Mammary epithelial cell (primary cell): ENCODE measurements at regions of chr2 and their contacts with region 1.

Region 1: GRCh38 chr2:85678794-85679672 is 11.0 kb upstream of the SFTPB start:
- DNase-seq: peak; percentile 71
- H3K4me3 ChIP-seq: peak overlapping the region in 1 of 3 experiments; percentile 25
- H3K27ac ChIP-seq: no peak overlapping the region
- H3K4me1 ChIP-seq: peaks cover 12% of the 10 kb centered on the region
- H3K27me3 ChIP-seq: no peaks in the 10 kb centered on the region
- CTCF ChIP-seq: peak; percentile 95 to 99

Region 2: DNA sequence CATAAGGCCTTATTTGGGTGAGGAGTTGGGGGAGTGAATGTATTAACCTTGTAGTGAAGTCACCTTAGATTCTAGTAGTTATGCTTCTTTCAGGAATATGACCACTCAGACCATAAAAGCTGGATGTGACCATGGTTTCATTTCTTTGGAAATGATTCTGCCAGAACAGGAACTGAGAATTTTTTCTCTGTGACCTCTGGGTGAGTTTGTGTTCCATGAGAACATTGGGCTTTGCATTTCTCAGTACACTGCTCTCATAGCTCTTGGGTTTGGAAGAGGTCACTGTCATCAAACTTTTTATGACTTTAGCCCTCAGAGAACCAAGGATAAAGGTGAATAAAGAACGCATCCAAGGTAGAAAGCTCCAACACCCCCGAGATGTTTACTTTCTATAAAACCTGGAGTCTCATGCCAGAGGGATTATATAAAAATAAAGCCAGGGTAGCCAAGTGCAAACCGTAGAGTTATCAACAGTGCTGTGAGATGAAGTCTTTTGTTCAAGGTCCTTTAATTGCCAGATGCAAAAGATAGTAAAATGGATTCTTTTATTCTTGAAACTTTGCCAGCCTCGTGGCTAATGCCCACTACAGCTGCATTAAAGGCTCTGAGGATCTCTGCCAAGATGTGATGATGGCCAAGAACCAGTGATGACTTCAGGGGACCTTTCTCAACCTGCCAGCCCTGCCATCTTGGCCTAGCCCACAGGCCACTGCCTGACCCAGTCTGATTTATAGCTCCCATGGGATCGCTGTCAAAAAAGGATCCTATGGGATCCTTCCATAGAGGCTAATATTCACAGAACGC is 167.8 kb before region 1 on chr2:
- CTCF ChIA-PET with region 1: no interaction called
- dilution Hi-C with region 1: no loop called
- in situ Hi-C with region 1: no loop called
- intact Hi-C with region 1: no loop called
- DNase-seq: no peak
- H3K4me3 ChIP-seq: no peak overlapping the region
- H3K27ac ChIP-seq: no peak overlapping the region
- H3K4me1 ChIP-seq: no peaks in the 10 kb centered on the region
- H3K27me3 ChIP-seq: no peaks in the 10 kb centered on the region
- CTCF ChIP-seq: no peak

Region 3: DNA sequence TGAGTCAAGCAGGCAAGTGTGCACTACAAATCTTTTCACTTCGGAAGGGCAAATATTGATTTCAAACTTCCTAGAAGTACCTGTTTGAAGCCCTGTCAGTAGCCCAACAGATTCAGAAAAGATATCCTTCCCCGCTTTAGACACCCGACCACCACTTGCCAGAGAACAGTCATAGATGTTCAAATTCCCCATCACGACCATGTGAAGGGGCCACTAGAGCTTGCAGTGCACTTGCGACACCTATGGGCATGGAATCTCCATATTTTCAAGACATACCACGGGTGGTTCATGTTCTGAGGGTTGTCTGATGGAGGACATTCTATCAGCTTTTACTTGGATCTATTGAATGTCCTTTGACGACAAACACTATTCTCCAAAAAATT is 39.0 kb after region 1 on chr2:
- CTCF ChIA-PET with region 1: no interaction called
- dilution Hi-C with region 1: loop called (anchors 5 kb)
- in situ Hi-C with region 1: no loop called
- intact Hi-C with region 1: no loop called
- DNase-seq: no peak
- H3K4me3 ChIP-seq: no peak overlapping the region
- H3K27ac ChIP-seq: no peak overlapping the region
- H3K4me1 ChIP-seq: peaks cover 4% of the 10 kb centered on the region
- H3K27me3 ChIP-seq: no peaks in the 10 kb centered on the region
- CTCF ChIP-seq: no peak

Region 4: DNA sequence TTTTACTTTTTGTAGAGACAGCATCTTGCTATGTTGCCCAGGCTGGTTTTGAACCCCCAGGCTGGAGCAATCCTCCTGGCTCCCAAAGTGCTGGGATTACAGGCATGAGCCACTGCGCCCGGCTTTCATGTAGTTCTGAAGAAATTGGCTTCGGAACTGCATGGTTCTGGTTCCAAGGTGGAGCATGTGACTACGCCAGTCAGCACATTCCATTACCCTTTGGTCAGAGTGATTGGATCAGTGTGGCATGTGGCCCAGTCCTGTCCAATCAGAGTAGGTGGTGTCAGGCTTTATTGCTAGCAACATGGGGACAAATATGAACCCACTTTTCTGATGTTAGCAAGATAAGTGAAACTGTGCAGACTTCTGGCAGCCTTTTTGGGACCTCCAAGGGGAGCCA is 58.4 kb after region 1 on chr2:
- CTCF ChIA-PET with region 1: no interaction called
- dilution Hi-C with region 1: no loop called
- in situ Hi-C with region 1: no loop called
- intact Hi-C with region 1: no loop called
- DNase-seq: peak; percentile 41
- H3K4me3 ChIP-seq: no peak overlapping the region
- H3K27ac ChIP-seq: no peak overlapping the region
- H3K4me1 ChIP-seq: peaks cover 13% of the 10 kb centered on the region
- H3K27me3 ChIP-seq: no peaks in the 10 kb centered on the region
- CTCF ChIP-seq: no peak